Calu3 (cell line): ENCODE measurements at regions of chr20 and their contacts with region 1.

Region 1: DNA sequence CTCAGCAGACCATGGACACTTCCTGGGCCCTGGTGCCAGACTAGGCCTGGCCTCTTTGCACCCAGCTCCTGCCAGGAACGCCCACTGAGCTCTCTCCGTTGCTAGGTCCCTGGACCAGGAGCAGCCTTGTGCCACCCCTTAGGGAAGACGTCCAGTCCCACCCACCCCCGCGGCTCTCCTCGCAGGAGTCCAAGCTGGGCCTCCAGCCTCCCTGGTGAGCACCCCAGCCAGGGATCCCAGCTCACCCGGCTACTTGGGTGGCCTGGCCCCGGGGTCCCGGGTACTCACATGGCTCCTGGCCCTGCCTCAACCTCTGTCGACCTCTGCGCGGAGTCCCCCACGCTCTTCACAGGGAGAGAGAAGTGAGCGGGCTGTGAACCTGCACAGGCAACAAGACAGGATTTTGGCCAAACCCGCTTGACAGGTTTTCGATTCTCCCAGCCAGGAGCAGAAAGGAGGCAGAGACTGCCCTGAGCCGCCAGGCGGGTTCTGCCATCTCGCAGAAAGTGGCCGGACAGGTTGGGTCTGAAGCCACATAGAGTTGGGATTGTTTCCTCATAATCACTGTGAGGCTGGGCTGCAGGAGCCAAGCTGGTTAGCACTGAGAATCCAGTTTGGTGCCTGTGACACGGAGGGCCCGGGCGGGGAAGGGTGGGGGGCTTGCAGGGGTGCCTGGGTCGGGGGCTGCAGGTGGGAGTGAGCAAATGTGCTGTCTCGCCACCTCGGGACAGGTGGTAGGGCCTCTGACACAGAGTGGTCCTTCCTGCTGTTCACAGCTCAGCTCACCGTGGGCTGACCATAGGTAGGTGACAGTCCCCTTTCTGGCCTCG is at the start of gene RBBP8NL:
- DNase-seq: peak; percentile 99
- H3K4me3 Mint-ChIP-seq: peak within 1 kb of the TSS; percentile 85
- H3K27ac Mint-ChIP-seq: peak within 1 kb of the TSS; percentile 89
- H3K4me1 Mint-ChIP-seq: peaks cover 44% of the 10 kb centered on the region
- H3K27me3 Mint-ChIP-seq: peaks cover 14% of the 10 kb centered on the region
- CTCF ChIP-seq: peak; percentile 69
- total RNA-seq, gene RBBP8NL: 6.2 and 6.4 TPM in 2 replicates

Region 2: GRCh38 chr20:62336329-62336728 is 91.1 kb before region 1 on chr20:
- CTCF ChIA-PET with region 1: no interaction called
- intact Hi-C with region 1: no loop called
- DNase-seq: no peak
- H3K4me3 Mint-ChIP-seq: no peak overlapping the region
- H3K27ac Mint-ChIP-seq: peak overlapping the region; percentile 50
- H3K4me1 Mint-ChIP-seq: no peaks in the 10 kb centered on the region
- H3K27me3 Mint-ChIP-seq: no peaks in the 10 kb centered on the region
- CTCF ChIP-seq: no peak

Region 3: GRCh38 chr20:62409931-62410745 is 17.2 kb before region 1 on chr20:
- CTCF ChIA-PET with region 1: interaction called, 11 read pairs
- intact Hi-C with region 1: no loop called
- DNase-seq: peak; percentile 68
- H3K4me3 Mint-ChIP-seq: no peak overlapping the region
- H3K27ac Mint-ChIP-seq: peak overlapping the region; percentile 4
- H3K4me1 Mint-ChIP-seq: peaks cover 27% of the 10 kb centered on the region
- H3K27me3 Mint-ChIP-seq: no peaks in the 10 kb centered on the region
- CTCF ChIP-seq: peak; percentile 94

Region 4: DNA sequence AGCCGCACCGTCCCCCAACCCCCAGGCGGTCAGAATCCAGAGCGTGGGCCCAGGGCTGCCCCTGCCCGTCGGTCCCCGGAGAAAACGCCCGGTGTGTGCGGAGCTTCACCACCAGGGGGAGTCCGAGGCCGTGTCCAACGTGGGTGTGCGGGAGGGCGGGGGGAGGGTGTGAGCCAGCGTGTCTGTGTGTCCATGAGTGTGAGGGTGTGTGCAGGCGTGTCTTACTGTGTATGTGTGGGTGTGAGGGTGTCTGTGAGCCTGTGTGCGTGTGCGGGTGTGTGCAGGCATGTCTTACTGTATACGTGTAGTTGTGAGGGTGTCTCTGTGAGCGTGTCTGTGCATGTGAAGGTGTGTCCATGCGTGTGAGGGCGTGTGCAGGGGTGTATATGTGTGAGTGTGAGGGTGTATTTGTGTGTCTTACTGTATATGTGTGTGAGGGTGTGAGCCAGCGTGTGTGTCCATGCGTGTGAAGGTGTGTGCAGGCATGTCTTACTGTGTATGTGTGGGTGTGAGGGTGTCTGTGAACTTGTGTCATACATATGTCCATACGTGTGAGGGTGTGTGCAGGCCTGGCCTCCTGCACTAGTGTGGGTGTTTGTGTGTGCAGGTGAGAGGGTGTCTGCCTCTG is 73.0 kb after region 1 on chr20:
- CTCF ChIA-PET with region 1: interaction called, 3 read pairs
- intact Hi-C with region 1: loop called (anchors 2 kb)
- DNase-seq: peak; percentile 90
- H3K4me3 Mint-ChIP-seq: no peak overlapping the region
- H3K27ac Mint-ChIP-seq: peak overlapping the region; percentile 1
- H3K4me1 Mint-ChIP-seq: peaks cover 20% of the 10 kb centered on the region
- H3K27me3 Mint-ChIP-seq: peaks cover 23% of the 10 kb centered on the region
- CTCF ChIP-seq: peak; percentile 93